Right cardiac atrium (tissue), 5 donors: ENCODE measurements at regions of chr11 and their contacts with region 1.

Region 1: GRCh38 chr11:62542750-62543567 is 3.6 kb downstream of the AHNAK start:
- DNase-seq: peak; percentile 86 to 96 (median 95)
- ATAC-seq: peak; percentile 42 to 50
- H3K4me3 ChIP-seq: peak overlapping the region; percentile 96
- H3K27ac ChIP-seq: peak overlapping the region; percentile 87
- H3K4me1 ChIP-seq: peaks cover 30% of the 10 kb centered on the region
- H3K27me3 ChIP-seq: no peaks in the 10 kb centered on the region

Region 2: GRCh38 chr11:62394825-62395538 is 148.0 kb before region 1 on chr11:
- intact Hi-C with region 1: loop called (anchors 5 to 10 kb)
- DNase-seq: peak; percentile 87 to 95 (median 94)
- ATAC-seq: peak; percentile 76 to 79
- H3K4me3 ChIP-seq: peak overlapping the region; percentile 29
- H3K27ac ChIP-seq: peak overlapping the region; percentile 62
- H3K4me1 ChIP-seq: peaks cover 16% of the 10 kb centered on the region
- H3K27me3 ChIP-seq: no peaks in the 10 kb centered on the region

Region 3: DNA sequence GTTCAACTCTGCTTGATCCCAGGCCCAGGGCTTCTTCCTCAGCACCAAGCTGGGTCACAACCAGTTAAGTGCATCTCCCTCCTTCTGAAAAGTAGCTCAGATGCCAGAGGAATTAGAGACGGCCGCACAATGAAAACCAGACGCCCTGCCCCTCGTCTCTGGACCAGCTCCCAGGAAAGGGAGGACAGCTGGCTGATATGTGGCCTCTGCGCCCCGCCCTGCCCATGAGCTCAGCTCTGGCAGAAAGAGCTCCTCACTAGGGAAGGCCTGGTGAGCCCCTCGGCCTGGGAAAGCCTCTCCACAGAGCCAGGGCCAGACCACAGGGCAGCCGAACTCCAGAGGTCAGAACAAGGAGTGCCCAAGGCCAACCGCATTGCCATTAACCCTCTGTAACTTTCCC is 142.2 kb before region 1 on chr11:
- intact Hi-C with region 1: loop called (anchors 5 to 10 kb)
- DNase-seq: peak; percentile 90 to 96 (median 95)
- ATAC-seq: peak; percentile 72 to 74
- H3K4me3 ChIP-seq: no peak overlapping the region
- H3K27ac ChIP-seq: peak overlapping the region; percentile 68
- H3K4me1 ChIP-seq: peaks cover 19% of the 10 kb centered on the region
- H3K27me3 ChIP-seq: no peaks in the 10 kb centered on the region

Region 4: GRCh38 chr11:62427630-62428233 is 115.2 kb before region 1 on chr11:
- intact Hi-C with region 1: loop called in 3 of 4 experiments (anchors 5 to 10 kb)
- DNase-seq: no peak
- ATAC-seq: no peak
- H3K4me3 ChIP-seq: no peak overlapping the region
- H3K27ac ChIP-seq: no peak overlapping the region
- H3K4me1 ChIP-seq: peaks cover 3% of the 10 kb centered on the region
- H3K27me3 ChIP-seq: no peaks in the 10 kb centered on the region

Region 5: GRCh38 chr11:62439785-62440602 is 103.0 kb before region 1 on chr11:
- intact Hi-C with region 1: loop called in 1 of 4 experiments (anchors 10 kb)
- DNase-seq: peak; percentile 62 to 80 (median 76)
- ATAC-seq: peak; percentile 53 to 76
- H3K4me3 ChIP-seq: no peak overlapping the region
- H3K27ac ChIP-seq: peak overlapping the region; percentile 25
- H3K4me1 ChIP-seq: peaks cover 9% of the 10 kb centered on the region
- H3K27me3 ChIP-seq: no peaks in the 10 kb centered on the region

Region 6: GRCh38 chr11:62508268-62509058 is 34.5 kb before region 1 on chr11:
- intact Hi-C with region 1: loop called in 2 of 4 experiments (anchors 5 kb)
- DNase-seq: peak; percentile 73 to 92 (median 90)
- ATAC-seq: peak; percentile 87 to 88
- H3K4me3 ChIP-seq: no peak overlapping the region
- H3K27ac ChIP-seq: peak overlapping the region; percentile 85
- H3K4me1 ChIP-seq: peaks cover 11% of the 10 kb centered on the region
- H3K27me3 ChIP-seq: no peaks in the 10 kb centered on the region